Mammary epithelial cell (primary cell): ENCODE measurements at regions of chr10 and their contacts with region 1.

Region 1: GRCh38 chr10:62916141-62916603 is 100.0 kb upstream of the EGR2 start:
- DNase-seq: peak; percentile 97
- H3K4me3 ChIP-seq: no peak overlapping the region
- H3K27ac ChIP-seq: peak overlapping the region; percentile 83
- H3K4me1 ChIP-seq: peaks cover 23% of the 10 kb centered on the region
- H3K27me3 ChIP-seq: no peaks in the 10 kb centered on the region
- CTCF ChIP-seq: no peak

Region 2: DNA sequence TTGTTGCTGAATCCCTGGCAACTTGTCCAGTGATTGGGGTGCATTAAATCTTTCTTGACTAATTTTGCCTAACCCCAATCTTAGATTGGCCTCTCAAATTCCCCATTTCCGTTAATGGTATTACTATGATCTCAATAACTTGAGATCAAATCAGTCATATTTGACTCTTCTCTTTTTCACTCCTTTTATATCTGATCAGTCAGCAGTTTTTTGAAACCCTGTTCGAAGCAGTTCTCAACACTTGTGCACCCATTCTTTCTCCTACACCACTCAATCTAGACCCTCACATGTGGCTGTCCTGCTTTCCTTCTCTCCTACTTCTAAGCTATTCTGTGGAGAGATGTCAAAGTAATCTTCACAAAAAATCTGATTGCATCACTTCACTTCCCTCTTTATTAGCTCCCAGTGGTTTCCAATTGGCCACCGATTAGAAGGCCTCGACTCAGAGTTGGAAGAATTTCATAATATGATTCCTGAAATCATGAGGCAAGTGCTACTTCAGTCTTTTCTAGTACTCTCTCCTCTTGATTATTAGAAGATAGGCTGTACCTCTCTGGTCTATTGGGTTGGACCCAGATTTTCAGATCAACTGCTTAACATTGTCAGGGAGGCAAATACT is 413.1 kb before region 1 on chr10:
- CTCF ChIA-PET with region 1: no interaction called
- dilution Hi-C with region 1: no loop called
- in situ Hi-C with region 1: no loop called
- intact Hi-C with region 1: no loop called
- DNase-seq: no peak
- H3K4me3 ChIP-seq: no peak overlapping the region
- H3K27ac ChIP-seq: no peak overlapping the region
- H3K4me1 ChIP-seq: peaks cover 4% of the 10 kb centered on the region
- H3K27me3 ChIP-seq: no peaks in the 10 kb centered on the region
- CTCF ChIP-seq: no peak

Region 3: DNA sequence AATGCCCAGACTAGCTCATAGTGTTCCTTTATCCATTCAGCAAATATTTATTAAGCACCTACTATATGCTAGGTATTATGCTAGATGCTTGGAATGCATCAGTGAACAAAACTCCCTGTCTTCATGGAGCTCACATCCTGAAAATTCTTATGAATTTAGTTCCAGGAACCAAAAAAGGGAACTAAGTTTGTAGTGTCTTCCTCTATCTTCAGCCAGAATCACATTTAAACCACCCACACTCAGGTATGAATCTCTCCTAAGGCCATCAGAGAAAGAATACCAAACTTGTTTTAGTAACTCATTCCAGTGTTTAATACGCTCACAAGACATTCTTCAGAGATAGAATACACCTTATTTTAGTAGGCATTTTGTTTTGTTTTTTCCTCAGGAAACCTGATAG is 89.9 kb before region 1 on chr10:
- CTCF ChIA-PET with region 1: no interaction called
- dilution Hi-C with region 1: loop called (anchors 10 kb)
- in situ Hi-C with region 1: no loop called
- intact Hi-C with region 1: no loop called
- DNase-seq: no peak
- H3K4me3 ChIP-seq: no peak overlapping the region
- H3K27ac ChIP-seq: no peak overlapping the region
- H3K4me1 ChIP-seq: no peaks in the 10 kb centered on the region
- H3K27me3 ChIP-seq: no peaks in the 10 kb centered on the region
- CTCF ChIP-seq: no peak

Region 4: DNA sequence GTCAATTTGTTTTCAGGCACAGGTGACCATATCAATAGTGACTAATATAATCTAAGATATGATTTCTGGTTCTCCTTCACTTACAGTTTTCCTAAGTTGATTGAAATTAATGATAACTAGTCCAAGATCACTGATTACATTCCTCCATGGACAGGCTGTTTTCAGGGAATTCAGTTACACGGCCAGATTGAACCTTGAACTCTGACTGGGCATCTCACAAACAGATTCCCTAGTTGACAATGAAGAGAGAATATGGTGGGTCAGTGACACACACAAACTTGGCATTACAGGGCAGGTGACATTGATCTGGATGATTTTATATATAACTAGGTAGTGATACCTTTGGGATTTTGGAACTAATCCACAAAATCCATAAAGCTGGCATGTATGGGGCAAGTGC is 10.2 kb after region 1 on chr10:
- CTCF ChIA-PET with region 1: no interaction called
- dilution Hi-C with region 1: no loop called
- in situ Hi-C with region 1: no loop called
- intact Hi-C with region 1: no loop called
- DNase-seq: no peak
- H3K4me3 ChIP-seq: no peak overlapping the region
- H3K27ac ChIP-seq: no peak overlapping the region
- H3K4me1 ChIP-seq: peaks cover 7% of the 10 kb centered on the region
- H3K27me3 ChIP-seq: no peaks in the 10 kb centered on the region
- CTCF ChIP-seq: no peak

Region 5: GRCh38 chr10:62980687-62981086 is 64.5 kb after region 1 on chr10:
- CTCF ChIA-PET with region 1: no interaction called
- dilution Hi-C with region 1: loop called (anchors 5 kb)
- in situ Hi-C with region 1: no loop called
- intact Hi-C with region 1: no loop called
- DNase-seq: peak; percentile 74
- H3K4me3 ChIP-seq: no peak overlapping the region
- H3K27ac ChIP-seq: no peak overlapping the region
- H3K4me1 ChIP-seq: peaks cover 5% of the 10 kb centered on the region
- H3K27me3 ChIP-seq: no peaks in the 10 kb centered on the region
- CTCF ChIP-seq: no peak